ENCODE measurements at regions of chr19 and their contacts with region 1.

Region 1: DNA sequence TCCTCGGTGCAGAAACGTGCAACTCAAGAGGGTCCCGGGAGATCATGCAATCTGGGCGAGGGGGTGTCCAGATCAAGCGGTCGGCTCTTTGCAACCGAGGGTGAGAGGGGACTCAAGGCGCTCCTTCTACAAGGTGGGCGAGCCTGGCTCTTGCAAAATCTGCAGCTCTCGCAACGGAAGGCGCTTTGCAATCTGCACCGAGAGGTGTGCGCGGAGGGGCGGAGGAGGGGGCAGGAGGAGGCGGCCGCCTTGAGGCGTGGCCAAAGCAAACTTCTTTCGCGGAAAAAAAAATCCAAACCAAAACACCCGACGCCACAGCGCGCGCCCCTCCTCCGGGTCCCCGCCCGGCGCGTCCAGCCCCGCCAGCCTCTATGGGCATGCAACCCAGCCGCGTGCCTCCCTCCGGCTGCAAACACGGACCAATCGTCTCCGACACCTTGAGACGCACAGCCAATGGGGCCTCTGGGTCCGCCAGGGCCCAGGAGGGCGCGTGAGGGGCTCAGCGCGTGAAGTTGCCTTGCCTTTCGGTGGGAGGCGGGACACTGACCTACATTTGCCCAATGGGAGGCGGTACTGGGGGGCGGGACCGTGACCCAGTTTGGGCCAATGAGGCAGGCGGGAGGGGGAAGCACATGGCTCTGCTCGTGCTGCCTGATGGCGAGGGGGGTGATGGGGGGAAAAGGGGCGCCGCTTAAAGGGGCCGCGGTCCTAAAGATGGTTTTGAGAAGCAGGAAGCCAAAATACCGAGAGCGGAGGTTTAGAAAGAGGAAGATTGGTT is at the start of gene DBP:
- DNase-seq: peak; percentile 100
- H3K4me3 ChIP-seq: peak within 1 kb of the TSS; percentile 76
- H3K27ac ChIP-seq: peak within 1 kb of the TSS; percentile 94
- H3K4me1 ChIP-seq: peaks cover 46% of the 10 kb centered on the region
- CTCF ChIP-seq: no peak
- total RNA-seq, gene DBP: 20.8 and 35.6 TPM in 2 replicates

Region 2: DNA sequence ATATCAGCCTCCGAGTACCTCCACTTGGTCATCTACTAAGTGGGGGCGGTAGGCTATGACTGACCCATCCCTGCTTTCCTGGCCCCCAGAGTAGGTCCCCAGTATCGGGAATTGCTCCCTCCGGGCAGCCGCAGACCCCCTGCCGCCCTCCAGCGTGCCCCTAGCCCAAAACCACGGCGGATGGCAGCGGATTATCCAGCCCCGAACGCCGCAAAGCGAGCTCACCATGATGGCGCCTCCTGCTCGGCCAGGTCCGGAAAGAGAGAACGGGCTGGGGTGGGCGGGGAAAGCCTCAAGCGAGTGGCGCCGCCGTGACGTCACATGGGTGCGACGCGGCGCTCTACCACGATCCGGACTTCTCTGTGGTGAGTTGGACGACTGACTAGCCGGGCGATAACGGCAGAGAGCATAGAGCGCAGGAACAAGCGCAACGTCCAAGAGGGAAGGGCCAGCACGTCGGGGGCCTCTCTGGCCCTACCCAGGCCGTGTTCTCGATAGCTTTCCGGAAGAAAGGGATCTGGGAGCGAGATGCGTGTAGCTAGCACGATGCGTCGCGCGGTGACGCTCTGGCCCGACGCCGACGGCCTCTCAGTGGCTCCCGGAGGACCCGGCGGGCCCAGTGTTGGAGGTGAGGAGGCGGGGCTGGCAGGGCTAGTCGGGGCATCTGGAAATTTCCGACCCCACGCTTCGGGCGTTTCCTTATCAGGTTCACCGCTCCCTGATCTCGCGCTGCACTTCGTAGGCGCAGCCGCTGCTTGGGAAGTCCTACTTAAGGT is 18.3 kb before region 1 on chr19 and contains the starts of genes RPL18 and SPHK2:
- CTCF ChIA-PET with region 1: interaction called, 3 read pairs
- POLR2A ChIA-PET with region 1: interaction called, 6 read pairs
- intact Hi-C with region 1: loop called (anchors 1 kb)
- DNase-seq: peak; percentile 99
- H3K4me3 ChIP-seq: peak within 1 kb of the TSS; percentile 88
- H3K27ac ChIP-seq: peak within 1 kb of the TSS; percentile 72
- H3K4me1 ChIP-seq: peaks cover 60% of the 10 kb centered on the region
- CTCF ChIP-seq: no peak
- total RNA-seq, gene RPL18: 3,527 and 5,064 TPM in 2 replicates
- total RNA-seq, gene SPHK2: 12.4 and 18.2 TPM in 2 replicates

Measured in OCI-LY7 (cell line).